Activated naive CD4-positive, alpha-beta T cell treated with anti-CD3 and anti-CD28 coated beads for 36 hours (primary cell): ENCODE measurements at regions of chr2 and their contacts with region 1.

Region 1: GRCh38 chr2:233053928-233054784 is 6.0 kb upstream of the INPP5D start:
- DNase-seq: peak; percentile 82
- H3K4me3 Mint-ChIP-seq: no peak overlapping the region
- H3K27ac Mint-ChIP-seq: no peak overlapping the region
- H3K4me1 Mint-ChIP-seq: peaks cover 8% of the 10 kb centered on the region
- H3K27me3 Mint-ChIP-seq: no peaks in the 10 kb centered on the region

Region 2: GRCh38 chr2:232611551-232612218 is 442.5 kb before region 1 on chr2:
- CTCF ChIA-PET with region 1: interaction called, 3 read pairs
- intact Hi-C with region 1: loop called (anchors 1 kb)
- DNase-seq: peak; percentile 79
- H3K4me3 Mint-ChIP-seq: no peak overlapping the region
- H3K27ac Mint-ChIP-seq: no peak overlapping the region
- H3K4me1 Mint-ChIP-seq: no peaks in the 10 kb centered on the region
- H3K27me3 Mint-ChIP-seq: no peaks in the 10 kb centered on the region

Region 3: GRCh38 chr2:232761301-232761907 is 292.8 kb before region 1 on chr2:
- CTCF ChIA-PET with region 1: interaction called, 4 read pairs
- intact Hi-C with region 1: loop called (anchors 2 kb)
- DNase-seq: peak; percentile 68
- H3K4me3 Mint-ChIP-seq: no peak overlapping the region
- H3K27ac Mint-ChIP-seq: no peak overlapping the region
- H3K4me1 Mint-ChIP-seq: peaks cover 15% of the 10 kb centered on the region
- H3K27me3 Mint-ChIP-seq: no peaks in the 10 kb centered on the region

Region 4: DNA sequence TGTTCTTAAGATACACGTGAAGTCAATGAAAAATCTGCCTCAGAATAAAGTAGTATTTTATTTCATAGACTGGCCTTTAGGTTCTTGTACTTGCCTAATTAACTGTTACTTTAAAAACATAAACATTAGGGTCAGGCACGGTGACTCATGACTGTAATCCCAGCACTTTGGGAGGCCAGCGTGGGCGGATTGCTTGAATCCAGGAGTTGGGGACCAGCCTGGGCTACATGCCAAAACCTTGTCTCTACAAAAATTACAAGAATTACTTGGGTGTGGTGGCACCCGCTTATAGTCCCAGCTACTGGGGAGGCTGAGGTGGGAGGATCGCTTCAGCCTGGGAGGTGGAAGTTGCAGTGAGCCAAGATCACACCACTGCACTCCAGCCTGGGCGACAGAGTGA is 200.1 kb before region 1 on chr2:
- CTCF ChIA-PET with region 1: interaction called, 5 read pairs
- intact Hi-C with region 1: loop called (anchors 5 kb)
- DNase-seq: no peak
- H3K4me3 Mint-ChIP-seq: no peak overlapping the region
- H3K27ac Mint-ChIP-seq: no peak overlapping the region
- H3K4me1 Mint-ChIP-seq: no peaks in the 10 kb centered on the region
- H3K27me3 Mint-ChIP-seq: no peaks in the 10 kb centered on the region

Region 5: DNA sequence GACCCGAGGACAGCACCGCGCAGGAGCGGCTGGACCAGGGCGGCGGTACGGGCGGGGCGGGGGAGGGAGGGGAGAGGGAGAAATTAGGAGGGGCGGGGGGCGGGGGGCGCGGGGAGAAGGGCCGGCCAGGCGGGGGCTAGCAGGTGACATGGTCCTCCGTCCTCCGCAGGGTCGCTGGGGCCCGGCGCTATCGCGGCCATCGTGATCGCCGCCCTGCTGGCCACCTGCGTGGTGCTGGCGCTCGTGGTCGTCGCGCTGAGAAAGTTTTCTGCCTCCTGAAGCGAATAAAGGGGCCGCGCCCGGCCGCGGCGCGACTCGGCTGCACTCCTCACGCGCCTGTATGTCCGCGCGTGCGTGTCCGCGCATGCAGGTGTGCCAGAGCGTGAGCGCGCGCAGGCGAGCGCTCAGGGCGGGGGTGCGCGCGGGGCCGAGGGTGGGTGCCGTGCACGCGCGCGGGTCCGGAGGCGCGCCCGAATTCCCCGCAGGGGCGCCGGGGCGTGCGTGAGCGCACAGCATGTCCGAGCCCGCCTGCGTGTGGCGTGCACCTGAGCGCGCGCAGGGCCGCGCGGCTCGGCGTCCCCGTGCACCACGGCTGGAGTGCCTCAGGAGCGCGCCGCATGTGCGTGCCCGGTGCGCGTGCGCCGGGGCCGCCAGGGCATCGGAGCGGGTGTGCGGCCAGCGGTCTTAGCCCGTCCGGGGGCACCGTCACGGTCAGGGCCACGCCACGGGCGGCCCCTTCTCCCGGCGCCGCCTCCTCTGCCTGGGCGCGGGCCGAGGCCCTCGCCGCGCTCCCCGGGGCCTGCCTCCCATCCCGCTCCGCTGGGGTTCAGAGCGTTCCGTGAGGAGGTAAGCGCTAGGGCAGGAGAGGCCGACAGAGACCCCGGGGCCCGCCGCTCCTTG is 177.8 kb before region 1 on chr2:
- CTCF ChIA-PET with region 1: interaction called, 4 read pairs
- intact Hi-C with region 1: loop called (anchors 2 kb)
- DNase-seq: peak; percentile 19
- H3K4me3 Mint-ChIP-seq: peak overlapping the region; percentile 39
- H3K27ac Mint-ChIP-seq: no peak overlapping the region
- H3K4me1 Mint-ChIP-seq: peaks cover 8% of the 10 kb centered on the region
- H3K27me3 Mint-ChIP-seq: peaks cover 20% of the 10 kb centered on the region

Region 6: GRCh38 chr2:233075966-233076339 is 21.8 kb after region 1 on chr2:
- CTCF ChIA-PET with region 1: interaction called, 41 read pairs
- intact Hi-C with region 1: no loop called
- DNase-seq: peak; percentile 49
- H3K4me3 Mint-ChIP-seq: no peak overlapping the region
- H3K27ac Mint-ChIP-seq: no peak overlapping the region
- H3K4me1 Mint-ChIP-seq: peaks cover 35% of the 10 kb centered on the region
- H3K27me3 Mint-ChIP-seq: no peaks in the 10 kb centered on the region

Region 7: GRCh38 chr2:233129351-233129987 is 75.3 kb after region 1 on chr2:
- CTCF ChIA-PET with region 1: interaction called, 10 read pairs
- intact Hi-C with region 1: no loop called
- DNase-seq: no peak
- H3K4me3 Mint-ChIP-seq: no peak overlapping the region
- H3K27ac Mint-ChIP-seq: no peak overlapping the region
- H3K4me1 Mint-ChIP-seq: peaks cover 15% of the 10 kb centered on the region
- H3K27me3 Mint-ChIP-seq: no peaks in the 10 kb centered on the region